ENCODE measurements at regions of chr12 and their contacts with region 1.

Region 1: DNA sequence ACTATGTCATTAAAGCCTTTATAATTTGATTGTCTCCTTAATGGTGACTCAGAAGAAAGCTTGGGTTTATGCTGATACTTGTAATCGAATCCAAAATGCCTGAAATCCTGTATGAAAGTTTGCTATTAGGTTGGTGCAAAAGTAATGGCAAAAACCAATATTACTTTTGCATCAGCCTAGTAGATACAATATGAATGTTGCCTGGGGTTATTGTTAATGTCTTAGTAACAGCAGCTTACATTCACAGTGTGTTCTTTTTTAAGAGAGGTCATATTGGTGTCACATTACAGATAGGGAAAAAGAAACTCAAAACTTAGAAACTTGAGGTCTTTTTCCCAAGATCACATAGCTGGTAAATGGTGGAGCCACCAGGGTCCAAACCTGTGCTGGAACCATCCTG is 25.1 kb downstream of the SRGAP1 start:
- DNase-seq: peak; percentile 4
- H3K4me3 ChIP-seq: no peak overlapping the region
- H3K27ac ChIP-seq: no peak overlapping the region
- H3K4me1 ChIP-seq: peaks cover 11% of the 10 kb centered on the region
- H3K27me3 ChIP-seq: no peaks in the 10 kb centered on the region
- CTCF ChIP-seq: no peak

Region 2: GRCh38 chr12:63897931-63898330 is 28.3 kb after region 1 on chr12:
- CTCF ChIA-PET with region 1: no interaction called
- dilution Hi-C with region 1: no loop called
- in situ Hi-C with region 1: no loop called
- intact Hi-C with region 1: no loop called
- DNase-seq: no peak
- H3K4me3 ChIP-seq: no peak overlapping the region
- H3K27ac ChIP-seq: no peak overlapping the region
- H3K4me1 ChIP-seq: peaks cover 3% of the 10 kb centered on the region
- H3K27me3 ChIP-seq: no peaks in the 10 kb centered on the region
- CTCF ChIP-seq: no peak

Region 3: GRCh38 chr12:63940310-63941005 is 70.8 kb after region 1 on chr12:
- CTCF ChIA-PET with region 1: no interaction called
- dilution Hi-C with region 1: loop called (anchors 5 kb)
- in situ Hi-C with region 1: no loop called
- intact Hi-C with region 1: no loop called
- DNase-seq: no peak
- H3K4me3 ChIP-seq: no peak overlapping the region
- H3K27ac ChIP-seq: no peak overlapping the region
- H3K4me1 ChIP-seq: peaks cover 2% of the 10 kb centered on the region
- H3K27me3 ChIP-seq: no peaks in the 10 kb centered on the region
- CTCF ChIP-seq: no peak